ENCODE measurements at regions of chr6 and their contacts with region 1.

Region 1: GRCh38 chr6:1263039-1263849 is 48.7 kb upstream of the FOXQ1 start:
- DNase-seq: peak; percentile 40 to 67 (median 46)
- H3K4me3 ChIP-seq: no peak overlapping the region
- H3K4me3 Mint-ChIP-seq: no peak overlapping the region
- H3K27ac ChIP-seq: no peak overlapping the region
- H3K27ac Mint-ChIP-seq: peak overlapping the region in 1 of 7 donors; percentile 50
- H3K4me1 ChIP-seq: peaks cover 3 to 5% of the 10 kb centered on the region in 2 donors
- H3K4me1 Mint-ChIP-seq: peaks cover 3% of the 10 kb centered on the region
- H3K27me3 ChIP-seq: peaks cover 12 to 41% of the 10 kb centered on the region in 2 donors
- H3K27me3 Mint-ChIP-seq: peaks cover 6 to 19% (median 14%) of the 10 kb centered on the region in 3 donors
- CTCF ChIP-seq: peak; percentile 63

Region 2: DNA sequence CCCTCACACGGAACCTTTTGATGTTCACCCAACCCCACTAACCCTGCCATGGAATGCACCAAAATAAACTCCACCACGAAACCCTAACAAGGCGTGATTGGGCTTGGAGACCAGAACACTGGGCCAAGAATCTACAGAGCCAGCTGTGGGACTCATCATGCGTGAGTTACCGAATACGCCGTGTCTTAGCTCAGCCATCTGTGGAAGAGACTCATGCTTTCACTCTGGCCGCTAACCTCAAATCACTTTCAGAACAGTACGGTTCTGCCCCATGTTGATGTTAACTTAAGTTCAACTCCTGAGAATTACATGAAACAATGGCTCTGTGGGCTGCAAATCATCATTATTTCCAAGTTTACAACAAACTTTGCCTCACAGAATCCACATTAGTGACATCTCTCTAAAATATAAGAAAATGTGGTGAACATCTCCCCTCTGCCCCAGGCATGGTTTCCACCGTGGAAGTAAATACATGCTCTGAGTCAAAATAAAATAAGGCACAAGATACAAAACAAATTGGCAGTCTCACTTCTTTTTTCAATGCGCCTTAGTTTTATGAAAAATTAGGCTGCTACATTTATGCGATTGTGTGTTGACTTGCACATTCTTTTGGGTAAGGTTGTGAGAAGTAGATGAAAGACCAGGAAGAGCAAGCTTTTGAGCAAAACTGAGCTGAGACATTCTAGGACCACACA is 261.4 kb before region 1 on chr6:
- intact Hi-C with region 1: no loop called
- DNase-seq: no peak
- H3K4me3 ChIP-seq: no peak overlapping the region
- H3K4me3 Mint-ChIP-seq: no peak overlapping the region
- H3K27ac ChIP-seq: no peak overlapping the region
- H3K27ac Mint-ChIP-seq: no peak overlapping the region
- H3K4me1 ChIP-seq: no peaks in the 10 kb centered on the region
- H3K4me1 Mint-ChIP-seq: no peaks in the 10 kb centered on the region
- H3K27me3 ChIP-seq: no peaks in the 10 kb centered on the region
- H3K27me3 Mint-ChIP-seq: peaks cover 2 to 10% (median 5%) of the 10 kb centered on the region in 3 donors
- CTCF ChIP-seq: no peak

Region 3: DNA sequence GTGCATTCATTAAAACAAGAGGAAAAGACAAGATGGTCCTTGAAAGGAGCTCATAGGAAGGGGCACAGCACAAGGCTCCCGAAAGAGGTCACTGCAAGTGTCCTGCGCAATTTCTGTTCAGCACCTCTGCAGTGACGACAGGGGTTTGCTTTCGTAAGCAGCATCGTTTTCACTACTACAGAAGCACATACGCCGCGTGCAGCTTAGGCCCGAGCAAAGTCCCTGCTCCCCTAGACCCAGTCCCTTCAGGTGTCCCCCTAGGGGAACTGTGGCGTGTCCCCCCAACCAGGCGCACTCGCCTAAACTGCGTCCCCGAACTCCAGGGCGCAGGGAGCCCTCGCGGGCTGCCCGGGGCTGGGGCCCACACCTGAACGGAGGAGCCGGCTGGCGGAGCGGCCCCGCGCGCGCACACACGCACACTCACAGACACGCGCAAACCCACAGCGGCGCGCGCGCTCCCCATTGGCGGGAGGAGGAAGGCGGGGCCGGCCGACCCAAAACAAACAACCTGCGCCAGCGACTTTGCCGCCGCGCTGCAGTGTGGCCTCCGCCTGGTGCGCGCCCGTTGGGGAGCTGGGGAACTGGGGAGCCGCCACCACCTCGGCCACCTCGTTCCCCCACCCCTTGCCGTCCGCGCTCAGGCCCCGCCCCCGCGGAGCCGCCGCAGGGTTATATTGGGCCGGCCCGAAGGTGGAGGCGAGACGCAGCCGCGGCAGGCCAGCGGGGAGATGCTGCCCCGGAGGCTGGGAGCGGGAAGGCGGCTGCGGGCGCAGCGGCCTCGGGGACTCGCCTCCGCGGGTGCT is 48.4 kb after region 1 on chr6 and contains the start of gene FOXQ1:
- intact Hi-C with region 1: loop called in 1 of 2 experiments (anchors 10 kb)
- DNase-seq: peak in 2 of 3 donors; percentile 29 to 33
- H3K4me3 ChIP-seq: peak within 1 kb of the TSS; percentile 7 to 77 (median 31)
- H3K4me3 Mint-ChIP-seq: peak within 1 kb of the TSS; percentile 92 to 99
- H3K27ac ChIP-seq: no peak within 1 kb of the TSS
- H3K27ac Mint-ChIP-seq: peak within 1 kb of the TSS in 3 of 7 donors; percentile 68 to 74 (median 72)
- H3K4me1 ChIP-seq: peaks cover 27 to 42% of the 10 kb centered on the region in 2 donors
- H3K4me1 Mint-ChIP-seq: peaks cover 24% of the 10 kb centered on the region
- H3K27me3 ChIP-seq: peaks cover 80 to 87% of the 10 kb centered on the region in 2 donors
- H3K27me3 Mint-ChIP-seq: peaks cover 78 to 88% (median 85%) of the 10 kb centered on the region in 3 donors
- CTCF ChIP-seq: no peak
- polyA plus RNA-seq, gene FOXQ1: 0.11 TPM in 1 of 3 donors, not detected in the others

Region 4: GRCh38 chr6:1381481-1382330 is 118.5 kb after region 1 on chr6:
- intact Hi-C with region 1: loop called (anchors 2 to 5 kb)
- DNase-seq: peak in 1 of 3 donors; percentile 42
- H3K4me3 ChIP-seq: no peak overlapping the region
- H3K4me3 Mint-ChIP-seq: peak overlapping the region in 1 of 2 donors; percentile 81
- H3K27ac ChIP-seq: no peak overlapping the region
- H3K27ac Mint-ChIP-seq: no peak overlapping the region
- H3K4me1 ChIP-seq: peaks cover 5 to 23% of the 10 kb centered on the region in 2 donors
- H3K4me1 Mint-ChIP-seq: peaks cover 13% of the 10 kb centered on the region
- H3K27me3 ChIP-seq: peaks cover 90 to 97% of the 10 kb centered on the region in 2 donors
- H3K27me3 Mint-ChIP-seq: peaks cover 87 to 100% (median 89%) of the 10 kb centered on the region in 3 donors
- CTCF ChIP-seq: peak; percentile 88

Region 5: GRCh38 chr6:1396952-1397868 is 134.0 kb after region 1 on chr6:
- intact Hi-C with region 1: loop called in 1 of 2 experiments (anchors 5 kb)
- DNase-seq: peak; percentile 48 to 68 (median 53)
- H3K4me3 ChIP-seq: no peak overlapping the region
- H3K4me3 Mint-ChIP-seq: peak overlapping the region in 1 of 2 donors; percentile 83
- H3K27ac ChIP-seq: no peak overlapping the region
- H3K27ac Mint-ChIP-seq: no peak overlapping the region
- H3K4me1 ChIP-seq: peaks cover 0 to 6% of the 10 kb centered on the region in 2 donors
- H3K4me1 Mint-ChIP-seq: peaks cover 8% of the 10 kb centered on the region
- H3K27me3 ChIP-seq: peaks cover 67 to 92% of the 10 kb centered on the region in 2 donors
- H3K27me3 Mint-ChIP-seq: peaks cover 60 to 79% (median 69%) of the 10 kb centered on the region in 3 donors
- CTCF ChIP-seq: peak; percentile 95

Region 6: DNA sequence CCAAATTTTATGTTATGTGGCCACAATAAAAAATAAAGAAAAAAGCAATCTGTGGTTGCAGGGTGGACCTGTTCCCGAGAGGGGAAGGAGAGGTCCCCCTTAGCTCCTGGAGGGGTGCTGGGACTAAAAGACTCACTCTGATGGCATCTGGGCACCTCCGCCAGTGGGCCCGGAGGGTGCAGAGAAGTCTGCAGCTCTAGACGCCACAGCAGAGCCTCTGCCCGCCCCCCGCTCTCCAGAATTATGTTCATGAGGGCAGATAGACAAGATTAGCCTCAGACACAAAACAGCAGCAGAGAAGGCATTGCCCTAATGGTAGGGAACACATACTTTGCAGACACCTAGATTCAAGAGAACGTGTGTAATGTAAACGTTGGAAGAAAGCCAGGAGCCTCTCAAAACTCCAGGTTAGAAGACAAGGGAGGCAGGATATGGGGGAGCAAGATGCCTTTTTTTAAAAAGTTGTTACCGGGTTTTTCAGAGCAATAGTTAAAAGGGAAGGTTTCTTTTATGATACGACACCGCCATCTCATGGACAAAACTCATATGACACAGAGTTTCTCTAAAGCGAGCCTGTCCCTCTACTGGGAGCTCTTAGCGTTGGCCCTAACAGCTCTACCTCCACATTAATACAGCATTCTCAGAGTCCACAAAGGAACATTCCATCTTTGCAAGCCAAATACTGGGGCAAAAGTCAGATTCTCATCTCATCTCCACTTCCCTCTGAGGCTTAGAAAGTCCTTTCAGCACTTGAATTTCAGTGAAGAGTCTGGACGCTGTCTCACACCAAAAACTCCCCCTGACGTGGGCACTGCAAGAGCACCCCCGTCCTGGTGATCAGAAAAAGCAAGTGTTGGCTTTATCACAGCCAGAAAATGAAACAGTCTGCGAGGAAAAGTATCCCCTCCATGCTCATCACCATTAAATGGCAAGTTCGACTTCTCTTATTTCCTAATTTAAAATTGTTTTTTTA is 173.4 kb after region 1 on chr6:
- intact Hi-C with region 1: loop called in 1 of 2 experiments (anchors 5 kb)
- DNase-seq: peak; percentile 18 to 39 (median 36)
- H3K4me3 ChIP-seq: no peak overlapping the region
- H3K4me3 Mint-ChIP-seq: no peak overlapping the region
- H3K27ac ChIP-seq: no peak overlapping the region
- H3K27ac Mint-ChIP-seq: no peak overlapping the region
- H3K4me1 ChIP-seq: no peaks in the 10 kb centered on the region
- H3K4me1 Mint-ChIP-seq: no peaks in the 10 kb centered on the region
- H3K27me3 ChIP-seq: peaks cover 7 to 14% of the 10 kb centered on the region in 2 donors
- H3K27me3 Mint-ChIP-seq: peaks cover 29 to 37% (median 36%) of the 10 kb centered on the region in 3 donors
- CTCF ChIP-seq: peak; percentile 78

Region 7: DNA sequence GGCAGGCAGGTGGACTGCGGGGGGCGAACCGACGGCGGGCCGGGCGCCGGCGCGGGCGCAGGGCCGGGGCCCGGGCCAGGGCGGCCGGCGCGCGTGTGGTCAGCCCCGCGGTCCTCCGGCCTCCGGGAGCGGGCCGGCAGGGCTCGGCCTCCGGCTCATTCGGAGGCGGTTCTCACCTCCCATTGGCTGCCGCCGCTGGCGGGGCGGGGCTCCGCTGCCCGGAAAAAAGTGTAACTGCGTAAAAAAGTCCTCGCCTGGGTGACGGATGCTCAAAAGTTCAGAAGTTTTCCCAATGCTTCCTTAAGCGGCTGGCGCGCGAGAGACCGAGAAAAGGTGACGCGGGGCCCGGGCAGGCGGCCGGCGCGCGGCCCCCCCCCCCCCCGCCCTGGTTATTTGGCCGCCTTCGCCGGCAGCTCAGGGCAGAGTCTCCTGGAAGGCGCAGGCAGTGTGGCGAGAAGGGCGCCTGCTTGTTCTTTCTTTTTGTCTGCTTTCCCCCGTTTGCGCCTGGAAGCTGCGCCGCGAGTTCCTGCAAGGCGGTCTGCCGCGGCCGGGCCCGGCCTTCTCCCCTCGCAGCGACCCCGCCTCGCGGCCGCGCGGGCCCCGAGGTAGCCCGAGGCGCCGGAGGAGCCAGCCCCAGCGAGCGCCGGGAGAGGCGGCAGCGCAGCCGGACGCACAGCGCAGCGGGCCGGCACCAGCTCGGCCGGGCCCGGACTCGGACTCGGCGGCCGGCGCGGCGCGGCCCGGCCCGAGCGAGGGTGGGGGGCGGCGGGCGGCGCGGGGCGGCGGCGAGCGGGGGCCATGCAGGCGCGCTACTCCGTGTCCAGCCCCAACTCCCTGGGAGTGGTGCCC is 346.6 kb after region 1 on chr6 and contains the start of gene FOXC1:
- intact Hi-C with region 1: no loop called
- DNase-seq: peak; percentile 55 to 73 (median 64)
- H3K4me3 ChIP-seq: peak within 1 kb of the TSS; percentile 16 to 68 (median 20)
- H3K4me3 Mint-ChIP-seq: peak within 1 kb of the TSS; percentile 80 to 90
- H3K27ac ChIP-seq: no peak within 1 kb of the TSS
- H3K27ac Mint-ChIP-seq: no peak within 1 kb of the TSS
- H3K4me1 ChIP-seq: peaks cover 54 to 72% of the 10 kb centered on the region in 2 donors
- H3K4me1 Mint-ChIP-seq: peaks cover 52% of the 10 kb centered on the region
- H3K27me3 ChIP-seq: peaks cover 72 to 79% of the 10 kb centered on the region in 2 donors
- H3K27me3 Mint-ChIP-seq: peaks cover 72 to 95% (median 73%) of the 10 kb centered on the region in 3 donors
- CTCF ChIP-seq: no peak
- polyA plus RNA-seq, gene FOXC1: 0.36 TPM in 1 of 3 donors, not detected in the others

Measured in CD14-positive monocyte (primary cell).